ENCODE measurements at regions of chr12 and their contacts with region 1.

Region 1: DNA sequence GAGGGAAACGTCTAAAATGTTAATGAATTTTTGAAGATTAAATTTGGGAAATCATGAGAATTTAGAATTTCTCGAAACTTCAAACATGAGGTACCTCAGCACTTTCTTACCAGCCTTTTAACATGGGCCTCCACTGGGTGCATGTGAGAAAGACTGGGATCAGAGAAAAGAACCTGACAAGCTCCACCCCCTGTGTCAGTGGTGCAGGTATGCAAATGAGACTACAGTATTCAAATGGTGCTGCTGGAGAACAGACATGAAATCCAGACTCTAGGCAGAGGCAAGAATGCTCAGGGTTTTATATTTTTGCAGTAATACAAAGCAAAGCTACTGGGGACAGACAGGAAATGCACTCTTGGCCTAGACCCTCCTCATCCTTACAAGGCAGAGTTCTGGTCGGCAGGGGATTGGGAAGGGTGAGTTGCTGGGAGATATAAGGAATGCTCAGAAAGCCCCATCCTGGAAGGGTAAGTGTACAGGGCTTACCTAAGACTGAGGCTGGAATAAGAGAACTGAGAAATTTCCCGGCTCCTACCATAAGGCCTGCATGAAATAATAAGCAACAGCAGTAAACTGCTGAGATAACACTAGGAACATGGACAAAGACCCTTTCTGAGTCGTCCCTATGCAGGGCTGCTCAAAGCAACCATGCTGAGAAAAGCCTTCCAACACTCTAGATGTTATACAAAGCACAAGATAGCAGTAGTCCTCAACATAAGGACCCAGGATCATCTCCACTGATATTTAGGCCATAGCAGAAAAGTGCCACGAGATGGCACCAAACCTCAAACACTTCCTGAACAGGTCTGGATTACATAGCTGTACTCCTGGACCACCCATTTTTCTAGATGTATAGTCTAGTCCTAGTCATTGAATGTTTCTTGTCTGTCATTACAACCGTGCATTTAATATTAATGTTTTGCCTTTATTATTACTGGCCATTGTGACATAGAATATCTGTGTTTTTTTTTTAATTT is 260.8 kb downstream of the RASSF9 start:
- DNase-seq: no peak
- ATAC-seq: peak; percentile 62 to 82
- H3K4me3 ChIP-seq: no peak overlapping the region
- H3K27ac ChIP-seq: no peak overlapping the region
- H3K4me1 ChIP-seq: no peaks in the 10 kb centered on the region
- H3K27me3 ChIP-seq: no peaks in the 10 kb centered on the region
- CTCF ChIP-seq: peak; percentile 69

Region 2: GRCh38 chr12:85866986-85867776 is 291.8 kb after region 1 on chr12:
- intact Hi-C with region 1: loop called (anchors 5 kb)
- DNase-seq: no peak
- ATAC-seq: peak; percentile 83 to 88
- H3K4me3 ChIP-seq: peak overlapping the region; percentile 15
- H3K27ac ChIP-seq: no peak overlapping the region
- H3K4me1 ChIP-seq: peaks cover 8% of the 10 kb centered on the region
- H3K27me3 ChIP-seq: no peaks in the 10 kb centered on the region
- CTCF ChIP-seq: peak; percentile 73